ENCODE measurements at regions of chr3 and their contacts with region 1.

Region 1: DNA sequence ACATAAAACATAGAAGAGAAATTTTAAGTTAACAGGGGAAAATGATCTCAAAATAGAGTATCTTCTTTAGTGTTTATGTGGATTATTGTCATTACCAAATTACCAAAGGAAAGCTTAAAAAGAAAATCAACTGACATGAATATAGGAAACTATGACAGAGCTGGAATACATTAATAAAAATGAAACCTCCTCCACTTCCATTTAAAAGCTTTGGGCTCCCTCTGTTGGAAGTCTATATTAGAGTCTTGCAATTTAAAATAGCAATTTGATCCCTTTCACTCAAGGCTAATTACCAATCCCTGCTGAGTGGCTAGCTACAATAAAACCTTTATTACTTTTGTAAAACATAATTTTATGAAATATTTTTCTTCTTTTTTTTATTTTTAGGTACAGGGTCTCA is 61.4 kb upstream of the IMPG2 start:
- DNase-seq: peak in 6 of 9 donors; percentile 10 to 42 (median 24)
- ATAC-seq: peak; percentile 69
- H3K4me3 ChIP-seq: no peak overlapping the region
- H3K4me3 Mint-ChIP-seq: no peak overlapping the region
- H3K27ac ChIP-seq: no peak overlapping the region
- H3K27ac Mint-ChIP-seq: peak overlapping the region in 1 of 9 donors; percentile 40
- H3K4me1 ChIP-seq: no peaks in the 10 kb centered on the region
- H3K4me1 Mint-ChIP-seq: peaks cover 31 to 89% (median 73%) of the 10 kb centered on the region in 7 donors
- H3K27me3 ChIP-seq: no peaks in the 10 kb centered on the region
- H3K27me3 Mint-ChIP-seq: no peaks in the 10 kb centered on the region

Region 2: GRCh38 chr3:101069901-101070798 is 311.7 kb before region 1 on chr3:
- CTCF ChIA-PET with region 1: interaction called, 5 read pairs
- POLR2A ChIA-PET with region 1: no interaction called
- intact Hi-C with region 1: loop called (anchors 1 kb)
- DNase-seq: peak; percentile 17 to 60 (median 30)
- ATAC-seq: peak; percentile 66
- H3K4me3 ChIP-seq: no peak overlapping the region
- H3K4me3 Mint-ChIP-seq: no peak overlapping the region
- H3K27ac ChIP-seq: no peak overlapping the region
- H3K27ac Mint-ChIP-seq: peak overlapping the region in 1 of 9 donors; percentile 39
- H3K4me1 ChIP-seq: peaks cover 0 to 4% of the 10 kb centered on the region in 2 donors
- H3K4me1 Mint-ChIP-seq: peaks cover 0 to 4% (median 0%) of the 10 kb centered on the region in 7 donors
- H3K27me3 ChIP-seq: no peaks in the 10 kb centered on the region
- H3K27me3 Mint-ChIP-seq: peaks cover 13 to 25% (median 20%) of the 10 kb centered on the region in 5 donors